Aorta (tissue), 5 donors: ENCODE measurements at regions of chr20 and their contacts with region 1.

Region 1: DNA sequence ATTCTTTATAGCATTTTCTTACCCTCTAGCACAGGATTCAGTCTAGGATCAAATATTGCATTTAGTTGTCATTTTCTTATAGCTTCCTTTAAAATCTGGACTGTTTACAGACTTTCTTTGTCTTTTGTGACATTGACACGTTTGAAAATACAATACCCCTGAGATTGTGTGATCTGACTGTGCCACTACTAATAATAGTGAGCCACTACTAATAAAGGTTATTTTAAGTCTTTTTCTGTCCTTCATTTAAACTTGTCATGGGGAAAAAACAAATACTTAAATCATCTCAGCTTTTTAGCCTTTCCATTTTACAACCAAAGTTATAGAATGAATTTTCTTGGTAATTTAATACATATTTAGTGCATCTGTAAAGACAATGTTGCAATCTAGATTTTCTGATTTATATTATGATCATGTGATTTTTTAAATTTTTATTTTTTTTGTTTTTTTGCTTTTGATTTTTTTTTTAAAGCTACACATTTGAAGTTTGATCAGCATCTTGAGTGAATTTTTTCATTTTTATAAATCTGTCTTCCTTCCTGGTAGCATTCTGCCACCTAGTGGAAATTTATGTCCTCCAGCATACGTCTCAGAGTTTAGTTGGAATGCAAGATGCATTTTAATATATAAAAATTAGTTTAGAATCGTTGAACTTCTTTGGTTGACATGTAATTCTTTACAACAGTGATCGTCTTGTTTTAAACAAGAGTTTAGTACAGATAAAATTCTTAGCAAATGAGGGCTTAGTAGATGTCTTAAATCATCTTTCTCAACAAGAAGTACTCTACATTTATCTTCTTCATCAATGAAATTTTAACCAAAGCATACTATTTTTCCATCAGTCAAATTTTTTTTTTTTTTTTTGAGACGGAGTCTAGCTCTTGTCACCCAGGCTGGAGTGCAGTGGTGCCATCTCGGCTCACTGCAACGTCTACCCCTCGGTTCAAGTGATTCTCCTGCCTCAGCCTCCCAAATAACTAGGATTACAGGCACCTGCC is 119.4 kb downstream of the NCOA3 start:
- DNase-seq: no peak
- ATAC-seq: no peak
- H3K4me3 ChIP-seq: no peak overlapping the region
- H3K27ac ChIP-seq: no peak overlapping the region
- H3K4me1 ChIP-seq: peaks cover 0 to 2% of the 10 kb centered on the region in 2 donors
- H3K27me3 ChIP-seq: no peaks in the 10 kb centered on the region

Region 2: DNA sequence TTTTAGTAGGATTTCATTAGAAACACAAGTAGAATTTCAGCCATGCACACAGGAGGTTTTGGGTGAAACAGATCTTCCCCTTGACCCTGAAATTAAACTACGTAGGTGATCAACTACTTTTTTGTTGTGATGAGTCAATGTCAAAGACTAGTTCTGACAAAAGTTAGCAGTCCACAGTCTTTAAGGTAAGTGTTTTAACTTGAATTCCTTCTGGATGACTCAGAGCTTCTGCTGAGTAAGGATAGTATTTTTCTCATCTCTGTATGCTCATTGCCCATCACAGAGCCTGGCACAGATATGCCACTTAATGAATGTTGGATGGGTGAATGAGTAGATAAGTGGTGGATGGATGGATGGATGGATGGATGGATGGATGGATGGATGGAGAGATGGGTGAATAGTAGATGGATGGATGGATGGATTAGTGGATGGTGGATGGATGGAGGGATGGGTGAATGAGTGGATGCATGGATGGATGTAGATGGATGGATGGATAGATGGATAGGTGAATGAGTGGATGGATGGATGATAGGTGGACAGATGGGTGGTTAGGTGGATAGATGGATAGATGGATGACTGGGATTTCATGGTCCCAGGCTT is 429.9 kb before region 1 on chr20:
- intact Hi-C with region 1: loop called (anchors 5 kb)
- DNase-seq: no peak
- ATAC-seq: no peak
- H3K4me3 ChIP-seq: no peak overlapping the region
- H3K27ac ChIP-seq: no peak overlapping the region
- H3K4me1 ChIP-seq: peaks cover 0 to 3% of the 10 kb centered on the region in 2 donors
- H3K27me3 ChIP-seq: no peaks in the 10 kb centered on the region

Region 3: DNA sequence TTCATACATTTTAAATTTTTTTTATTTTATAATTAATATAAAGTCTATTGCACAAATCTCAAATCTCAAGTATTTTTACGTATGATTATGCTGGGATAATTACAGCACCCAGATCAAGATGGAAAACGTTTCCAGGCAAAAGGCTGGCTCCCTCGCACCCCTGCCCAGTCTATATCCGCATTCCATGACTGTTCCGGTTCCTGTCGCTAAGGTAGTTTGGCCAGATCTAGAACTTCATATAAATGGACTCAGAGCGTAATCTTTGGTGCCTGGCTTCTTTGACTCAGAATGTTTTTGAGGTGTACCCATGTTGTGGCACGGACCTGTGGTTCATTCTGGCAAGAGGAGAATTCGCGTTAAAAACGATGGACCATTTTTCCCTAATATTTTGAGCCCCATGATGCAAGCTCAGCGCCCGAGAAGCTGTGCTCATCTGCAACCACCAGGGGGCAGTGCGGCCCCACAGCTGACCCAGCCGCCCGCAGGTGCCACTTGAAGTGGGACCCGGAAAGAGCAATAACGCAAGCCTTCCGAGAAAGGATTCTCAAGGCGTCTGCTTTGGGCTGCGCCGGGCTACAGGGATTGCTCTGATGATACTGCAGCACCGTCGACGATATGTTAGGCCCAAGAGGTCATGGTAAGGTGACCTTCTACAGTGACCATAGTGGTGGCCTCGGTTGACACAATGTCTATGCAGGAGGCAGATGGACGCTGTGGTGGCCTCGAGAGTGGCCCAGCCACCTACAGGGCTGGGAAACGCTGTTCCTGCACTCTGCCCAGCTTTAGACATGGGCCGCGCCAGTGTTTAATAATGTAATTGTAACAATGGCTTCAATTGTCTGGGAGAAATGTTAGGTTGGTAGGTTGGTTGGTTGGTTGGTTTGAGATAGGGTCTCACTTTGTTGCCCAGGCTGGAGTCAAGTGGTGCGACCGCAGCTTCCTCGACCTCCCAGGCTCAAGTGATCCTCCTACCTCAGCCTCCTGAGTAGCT is 424.7 kb before region 1 on chr20:
- intact Hi-C with region 1: loop called (anchors 5 kb)
- DNase-seq: peak; percentile 80 to 93
- ATAC-seq: peak; percentile 88
- H3K4me3 ChIP-seq: no peak overlapping the region
- H3K27ac ChIP-seq: no peak overlapping the region
- H3K4me1 ChIP-seq: no peaks in the 10 kb centered on the region
- H3K27me3 ChIP-seq: no peaks in the 10 kb centered on the region

Region 4: DNA sequence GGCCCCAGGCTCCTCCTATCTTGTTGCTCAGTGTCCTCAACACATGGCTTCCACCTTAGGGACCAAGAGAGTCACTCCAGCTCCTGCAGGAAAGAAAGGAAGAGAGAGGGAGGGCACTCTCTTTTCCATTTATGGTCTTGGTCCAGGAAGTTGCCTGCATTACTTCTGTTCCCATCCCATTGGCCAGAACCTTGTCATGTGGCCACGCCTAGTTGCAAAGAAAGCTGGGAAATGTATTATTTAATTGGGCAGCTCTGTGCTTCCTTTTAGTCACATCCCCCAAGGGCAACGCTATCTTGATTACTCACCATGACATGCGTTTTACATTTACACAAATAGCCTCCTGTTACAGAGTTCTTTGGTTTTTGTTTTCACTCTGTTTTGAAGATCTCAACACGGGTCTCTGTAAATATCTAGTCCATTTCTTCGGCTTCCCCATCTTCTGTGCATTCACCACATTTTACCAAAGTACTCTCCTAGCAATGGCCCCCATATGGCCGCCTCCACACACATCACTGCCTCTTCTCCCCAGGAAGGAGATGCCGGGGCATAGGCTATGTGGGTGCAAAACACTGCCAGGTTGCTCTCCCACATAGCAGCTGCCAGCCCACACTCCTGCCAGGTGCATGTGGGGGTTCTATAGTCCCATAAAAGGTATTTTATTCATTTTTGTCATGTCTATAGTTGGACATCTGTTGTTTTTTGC is 228.9 kb before region 1 on chr20:
- intact Hi-C with region 1: loop called (anchors 5 to 10 kb)
- DNase-seq: no peak
- ATAC-seq: peak; percentile 15
- H3K4me3 ChIP-seq: no peak overlapping the region
- H3K27ac ChIP-seq: no peak overlapping the region
- H3K4me1 ChIP-seq: no peaks in the 10 kb centered on the region
- H3K27me3 ChIP-seq: no peaks in the 10 kb centered on the region